CD8-positive, alpha-beta memory T cell (primary cell): ENCODE measurements at regions of chr1 and their contacts with region 1.

Region 1: DNA sequence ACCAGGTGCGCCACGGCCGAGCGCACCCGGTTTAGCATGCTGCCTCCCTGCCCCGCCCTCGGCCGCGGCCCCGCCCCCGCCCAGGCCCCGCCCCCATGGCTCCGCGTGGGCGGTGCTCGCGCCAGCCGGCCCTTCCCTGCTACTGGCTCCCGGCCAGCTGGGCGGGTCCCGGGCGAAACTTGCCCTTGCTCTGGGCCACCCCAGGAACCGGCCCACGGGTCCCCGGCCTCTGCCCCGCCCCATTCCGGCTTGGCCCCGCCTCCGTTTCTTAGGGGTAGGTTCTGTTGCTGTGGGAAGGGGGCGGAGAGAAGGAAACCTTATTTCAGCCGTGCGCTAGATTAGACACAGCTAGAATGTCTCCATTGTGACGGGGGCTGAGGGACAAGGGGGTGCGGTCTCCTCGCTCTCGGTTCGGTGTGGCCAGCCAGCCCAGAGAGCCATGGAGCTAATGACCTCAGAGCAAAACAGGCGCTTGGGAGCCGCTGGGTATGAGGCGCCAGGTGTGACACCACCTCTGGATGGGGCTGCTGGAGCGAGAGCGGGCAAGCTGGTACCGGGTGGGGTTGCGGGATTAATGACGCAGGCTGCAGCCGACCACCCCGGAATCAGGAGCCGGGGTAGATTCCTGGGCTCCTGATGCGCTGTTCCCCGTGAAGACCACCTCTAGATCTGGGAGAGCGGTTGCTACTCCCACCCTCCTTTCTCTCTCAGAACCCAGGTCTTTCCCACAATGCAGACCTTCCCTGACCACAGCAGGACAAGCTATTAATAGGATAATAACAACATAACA is at the start of gene PPM1J:
- DNase-seq: peak; percentile 92 to 99 (median 96)
- H3K4me3 ChIP-seq: peak within 1 kb of the TSS; percentile 87
- H3K4me3 Mint-ChIP-seq: peak within 1 kb of the TSS; percentile 85 to 96 (median 92)
- H3K27ac ChIP-seq: peak within 1 kb of the TSS; percentile 54
- H3K27ac Mint-ChIP-seq: peak within 1 kb of the TSS; percentile 83 to 97 (median 92)
- H3K4me1 ChIP-seq: peaks cover 20% of the 10 kb centered on the region
- H3K4me1 Mint-ChIP-seq: peaks cover 18 to 27% (median 21%) of the 10 kb centered on the region in 3 donors
- H3K27me3 ChIP-seq: peaks cover 13% of the 10 kb centered on the region
- H3K27me3 Mint-ChIP-seq: peaks cover 6 to 14% of the 10 kb centered on the region in 2 donors
- total RNA-seq, gene PPM1J: 0.33 TPM in 1 of 2 experiments, not detected in the other

Region 2: DNA sequence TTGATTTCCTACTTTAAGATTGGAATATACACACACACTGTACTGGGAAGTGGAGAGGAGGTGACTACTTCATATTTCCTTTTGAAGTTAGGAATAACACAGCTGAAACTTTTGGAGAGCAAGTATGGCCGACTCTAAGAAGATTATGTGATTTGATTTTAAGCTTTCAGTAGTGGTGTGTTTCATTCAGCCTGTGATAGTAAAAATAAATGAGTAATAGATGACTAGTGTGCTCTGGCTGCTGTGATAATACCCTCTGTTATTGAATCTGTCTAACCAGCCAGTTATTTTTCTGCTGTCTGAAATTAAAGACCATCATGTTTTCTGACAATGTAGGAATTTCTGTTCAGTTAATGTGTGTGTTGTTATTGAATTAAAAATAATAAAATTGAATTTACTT is 271.2 kb before region 1 on chr1:
- CTCF ChIA-PET with region 1: no interaction called
- POLR2A ChIA-PET with region 1: no interaction called
- DNase-seq: no peak
- H3K4me3 ChIP-seq: no peak overlapping the region
- H3K4me3 Mint-ChIP-seq: no peak overlapping the region
- H3K27ac ChIP-seq: no peak overlapping the region
- H3K27ac Mint-ChIP-seq: no peak overlapping the region
- H3K4me1 ChIP-seq: no peaks in the 10 kb centered on the region
- H3K4me1 Mint-ChIP-seq: no peaks in the 10 kb centered on the region
- H3K27me3 ChIP-seq: no peaks in the 10 kb centered on the region
- H3K27me3 Mint-ChIP-seq: peaks cover 10 to 12% of the 10 kb centered on the region in 2 donors

Region 3: GRCh38 chr1:112501810-112502641 is 213.4 kb before region 1 on chr1:
- CTCF ChIA-PET with region 1: interaction called, 51 read pairs
- POLR2A ChIA-PET with region 1: no interaction called
- DNase-seq: peak; percentile 29 to 68 (median 36)
- H3K4me3 ChIP-seq: peak overlapping the region; percentile 34
- H3K4me3 Mint-ChIP-seq: peak overlapping the region; percentile 7 to 76 (median 70)
- H3K27ac ChIP-seq: no peak overlapping the region
- H3K27ac Mint-ChIP-seq: no peak overlapping the region
- H3K4me1 ChIP-seq: peaks cover 5% of the 10 kb centered on the region
- H3K4me1 Mint-ChIP-seq: peaks cover 2 to 11% (median 6%) of the 10 kb centered on the region in 3 donors
- H3K27me3 ChIP-seq: peaks cover 42% of the 10 kb centered on the region
- H3K27me3 Mint-ChIP-seq: peaks cover 50 to 74% of the 10 kb centered on the region in 2 donors

Region 4: DNA sequence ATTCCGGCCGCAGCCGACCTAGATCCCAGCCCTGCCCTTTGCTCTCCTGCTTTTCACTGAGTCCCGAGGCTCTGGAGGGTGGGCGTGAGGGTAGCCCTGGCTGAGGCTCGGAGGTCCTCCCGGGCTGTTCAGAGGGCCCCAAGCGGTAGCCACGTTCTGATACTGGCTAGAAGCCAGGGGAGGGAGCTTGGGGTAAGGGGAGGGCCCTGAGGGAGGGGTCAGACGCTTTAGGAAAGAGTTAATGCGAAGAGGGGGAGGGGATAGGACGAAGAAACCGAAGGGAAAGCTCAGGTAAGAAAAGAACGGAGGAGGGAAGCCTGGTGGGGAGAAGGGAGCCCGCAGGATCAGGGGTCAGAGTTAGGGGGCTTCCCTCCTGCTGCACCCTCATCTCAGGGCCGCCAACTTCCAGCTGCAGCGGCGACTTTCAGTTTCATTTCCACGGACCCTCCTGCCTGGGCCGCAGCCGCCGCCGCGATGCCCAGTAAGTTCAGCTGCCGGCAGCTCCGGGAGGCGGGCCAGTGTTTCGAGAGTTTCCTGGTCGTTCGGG is 40.9 kb before region 1 on chr1 and contains the start of gene MOV10:
- CTCF ChIA-PET with region 1: interaction called, 16 read pairs
- POLR2A ChIA-PET with region 1: interaction called, 12 read pairs
- DNase-seq: peak; percentile 48 to 77 (median 64)
- H3K4me3 ChIP-seq: peak within 1 kb of the TSS; percentile 79
- H3K4me3 Mint-ChIP-seq: peak within 1 kb of the TSS; percentile 81 to 99 (median 97)
- H3K27ac ChIP-seq: peak within 1 kb of the TSS; percentile 81
- H3K27ac Mint-ChIP-seq: peak within 1 kb of the TSS; percentile 61 to 98 (median 94)
- H3K4me1 ChIP-seq: peaks cover 24% of the 10 kb centered on the region
- H3K4me1 Mint-ChIP-seq: peaks cover 45 to 58% (median 52%) of the 10 kb centered on the region in 3 donors
- H3K27me3 ChIP-seq: no peaks in the 10 kb centered on the region
- H3K27me3 Mint-ChIP-seq: no peaks in the 10 kb centered on the region
- total RNA-seq, gene MOV10: 29.9 to 31.0 TPM

Region 5: GRCh38 chr1:112788561-112788960 is 73.1 kb after region 1 on chr1:
- CTCF ChIA-PET with region 1: no interaction called
- POLR2A ChIA-PET with region 1: no interaction called
- DNase-seq: no peak
- H3K4me3 ChIP-seq: no peak overlapping the region
- H3K4me3 Mint-ChIP-seq: no peak overlapping the region
- H3K27ac ChIP-seq: no peak overlapping the region
- H3K27ac Mint-ChIP-seq: no peak overlapping the region
- H3K4me1 ChIP-seq: no peaks in the 10 kb centered on the region
- H3K4me1 Mint-ChIP-seq: no peaks in the 10 kb centered on the region
- H3K27me3 ChIP-seq: no peaks in the 10 kb centered on the region
- H3K27me3 Mint-ChIP-seq: peaks cover 0 to 16% of the 10 kb centered on the region in 2 donors

Region 6: GRCh38 chr1:112803906-112804762 is 88.7 kb after region 1 on chr1:
- CTCF ChIA-PET with region 1: interaction called, 16 read pairs
- POLR2A ChIA-PET with region 1: no interaction called
- DNase-seq: peak; percentile 3 to 51 (median 19)
- H3K4me3 ChIP-seq: no peak overlapping the region
- H3K4me3 Mint-ChIP-seq: no peak overlapping the region
- H3K27ac ChIP-seq: no peak overlapping the region
- H3K27ac Mint-ChIP-seq: no peak overlapping the region
- H3K4me1 ChIP-seq: no peaks in the 10 kb centered on the region
- H3K4me1 Mint-ChIP-seq: no peaks in the 10 kb centered on the region
- H3K27me3 ChIP-seq: peaks cover 4% of the 10 kb centered on the region
- H3K27me3 Mint-ChIP-seq: peaks cover 4 to 5% of the 10 kb centered on the region in 2 donors